ENCODE measurements at regions of chr10 and their contacts with region 1.

Region 1: DNA sequence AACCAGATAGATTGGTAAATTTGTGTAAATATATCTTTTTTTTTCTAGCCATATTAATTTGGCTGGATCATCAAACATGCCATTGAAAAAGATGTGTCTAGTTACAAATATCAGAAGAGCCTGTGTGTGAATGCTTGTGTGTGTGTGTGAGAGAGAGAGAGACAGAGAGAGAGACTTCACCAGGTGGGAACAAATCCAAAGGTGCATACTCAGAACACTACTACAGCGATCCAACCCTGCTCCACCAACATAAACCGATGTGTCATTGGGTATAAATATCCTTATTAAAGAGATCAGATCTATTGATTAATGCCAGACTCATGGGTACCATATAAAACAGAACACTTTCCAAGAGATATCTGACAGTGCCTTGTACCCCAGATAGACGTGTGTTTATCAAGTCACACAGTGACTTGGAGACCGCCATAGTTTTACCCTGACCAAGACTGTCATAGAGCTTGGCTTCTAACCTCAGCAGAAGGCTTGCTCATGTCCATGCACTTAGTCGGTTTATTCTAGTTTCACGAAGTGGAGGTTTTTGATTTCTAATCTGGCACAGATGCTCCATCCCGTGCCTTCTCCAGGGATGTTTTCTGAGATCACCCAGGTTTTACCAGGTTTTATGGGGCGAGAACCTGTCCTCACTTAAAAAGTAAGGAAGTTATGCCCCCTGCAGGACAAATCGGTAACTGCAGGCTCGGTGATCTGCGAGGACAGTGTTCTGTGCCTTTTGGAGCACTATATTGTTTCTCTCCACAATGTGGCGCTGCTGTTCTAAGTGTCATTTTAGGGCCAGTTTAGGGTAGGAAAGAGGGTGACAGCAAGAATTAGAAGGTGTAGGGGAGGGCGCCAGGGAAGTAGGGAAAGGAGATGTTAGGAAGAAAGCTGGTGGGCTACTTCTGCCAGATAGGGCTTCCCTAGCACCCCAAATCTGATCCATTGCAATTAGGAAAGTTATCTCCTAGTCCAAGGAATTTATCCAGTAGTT is 29.3 kb upstream of the WNT8B start:
- DNase-seq: peak; percentile 98
- H3K4me3 Mint-ChIP-seq: no peak overlapping the region
- H3K27ac Mint-ChIP-seq: no peak overlapping the region
- H3K4me1 Mint-ChIP-seq: peaks cover 9% of the 10 kb centered on the region
- H3K27me3 Mint-ChIP-seq: no peaks in the 10 kb centered on the region

Region 2: DNA sequence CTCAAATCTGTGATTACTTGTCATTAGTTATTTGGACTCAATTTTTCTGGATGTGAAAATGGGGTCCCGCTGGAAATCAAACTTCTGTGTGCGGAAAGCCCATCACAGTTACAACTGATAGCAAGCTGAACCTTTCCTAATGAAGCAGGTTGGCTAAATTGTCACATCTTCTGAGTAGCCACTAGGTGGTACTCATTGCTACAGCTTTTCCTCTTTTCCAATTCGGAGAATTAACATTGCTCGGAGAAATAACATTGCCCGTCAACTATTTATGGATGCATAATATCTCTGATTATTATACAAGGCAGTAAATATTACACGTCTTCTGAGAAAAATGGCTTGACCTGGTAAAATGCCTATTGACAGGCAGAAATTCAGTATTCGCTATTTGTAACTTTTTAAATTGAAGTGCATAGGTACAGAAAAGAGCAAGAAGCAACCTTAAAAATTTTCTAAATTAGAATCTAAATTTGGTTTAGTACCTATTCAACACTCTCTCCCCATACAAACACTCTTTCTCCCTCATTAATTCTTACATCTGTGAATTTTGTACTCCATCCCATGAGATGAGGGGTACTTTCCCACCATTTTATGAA is 129.7 kb before region 1 on chr10:
- CTCF ChIA-PET with region 1: interaction called, 11 read pairs
- DNase-seq: no peak
- H3K4me3 Mint-ChIP-seq: no peak overlapping the region
- H3K27ac Mint-ChIP-seq: no peak overlapping the region
- H3K4me1 Mint-ChIP-seq: no peaks in the 10 kb centered on the region
- H3K27me3 Mint-ChIP-seq: peaks cover 69% of the 10 kb centered on the region

Region 3: GRCh38 chr10:100346765-100347567 is 86.6 kb before region 1 on chr10 and contains the start of gene SCD:
- CTCF ChIA-PET with region 1: interaction called, 218 read pairs
- DNase-seq: peak; percentile 95
- H3K4me3 Mint-ChIP-seq: peak within 1 kb of the TSS; percentile 99
- H3K27ac Mint-ChIP-seq: peak within 1 kb of the TSS; percentile 80
- H3K4me1 Mint-ChIP-seq: peaks cover 68% of the 10 kb centered on the region
- H3K27me3 Mint-ChIP-seq: no peaks in the 10 kb centered on the region

Region 4: GRCh38 chr10:100481462-100482081 is 48.0 kb after region 1 on chr10:
- CTCF ChIA-PET with region 1: interaction called, 18 read pairs
- DNase-seq: peak; percentile 93
- H3K4me3 Mint-ChIP-seq: peak overlapping the region; percentile 72
- H3K27ac Mint-ChIP-seq: peak overlapping the region; percentile 67
- H3K4me1 Mint-ChIP-seq: peaks cover 31% of the 10 kb centered on the region
- H3K27me3 Mint-ChIP-seq: peaks cover 18% of the 10 kb centered on the region

Region 5: GRCh38 chr10:100524638-100525037 is 91.1 kb after region 1 on chr10:
- CTCF ChIA-PET with region 1: interaction called, 84 read pairs
- DNase-seq: no peak
- H3K4me3 Mint-ChIP-seq: no peak overlapping the region
- H3K27ac Mint-ChIP-seq: no peak overlapping the region
- H3K4me1 Mint-ChIP-seq: peaks cover 35% of the 10 kb centered on the region
- H3K27me3 Mint-ChIP-seq: no peaks in the 10 kb centered on the region